PC-3 (cell line): ENCODE measurements at regions of chr1 and their contacts with region 1.

Region 1: GRCh38 chr1:22416555-22417454 is 34.8 kb upstream of the ZBTB40 start:
- DNase-seq: peak; percentile 82
- ATAC-seq: peak; percentile 45
- H3K4me3 ChIP-seq: no peak overlapping the region
- H3K27ac ChIP-seq: no peak overlapping the region
- H3K4me1 ChIP-seq: peaks cover 29% of the 10 kb centered on the region
- H3K27me3 ChIP-seq: no peaks in the 10 kb centered on the region
- CTCF ChIP-seq: peak; percentile 98

Region 2: GRCh38 chr1:22131875-22132486 is 284.8 kb before region 1 on chr1:
- CTCF ChIA-PET with region 1: interaction called, 8 read pairs
- POLR2A ChIA-PET with region 1: no interaction called
- intact Hi-C with region 1: loop called (anchors 1 kb)
- DNase-seq: peak; percentile 63
- ATAC-seq: peak; percentile 68
- H3K4me3 ChIP-seq: no peak overlapping the region
- H3K27ac ChIP-seq: no peak overlapping the region
- H3K4me1 ChIP-seq: peaks cover 20% of the 10 kb centered on the region
- H3K27me3 ChIP-seq: no peaks in the 10 kb centered on the region
- CTCF ChIP-seq: peak; percentile 93

Region 3: GRCh38 chr1:22275721-22276395 is 140.9 kb before region 1 on chr1:
- CTCF ChIA-PET with region 1: interaction called, 3 read pairs
- POLR2A ChIA-PET with region 1: no interaction called
- intact Hi-C with region 1: loop called (anchors 2 kb)
- DNase-seq: peak; percentile 67
- ATAC-seq: peak; percentile 89
- H3K4me3 ChIP-seq: no peak overlapping the region
- H3K27ac ChIP-seq: peak overlapping the region; percentile 73
- H3K4me1 ChIP-seq: peaks cover 34% of the 10 kb centered on the region
- H3K27me3 ChIP-seq: no peaks in the 10 kb centered on the region
- CTCF ChIP-seq: peak; percentile 79

Region 4: GRCh38 chr1:22641906-22642636 is 225.3 kb after region 1 on chr1:
- CTCF ChIA-PET with region 1: no interaction called
- POLR2A ChIA-PET with region 1: interaction called, 7 read pairs
- intact Hi-C with region 1: loop called (anchors 1 kb)
- DNase-seq: peak; percentile 69
- ATAC-seq: peak; percentile 90
- H3K4me3 ChIP-seq: no peak overlapping the region
- H3K27ac ChIP-seq: no peak overlapping the region
- H3K4me1 ChIP-seq: peaks cover 15% of the 10 kb centered on the region
- H3K27me3 ChIP-seq: no peaks in the 10 kb centered on the region
- CTCF ChIP-seq: peak; percentile 91

Region 5: DNA sequence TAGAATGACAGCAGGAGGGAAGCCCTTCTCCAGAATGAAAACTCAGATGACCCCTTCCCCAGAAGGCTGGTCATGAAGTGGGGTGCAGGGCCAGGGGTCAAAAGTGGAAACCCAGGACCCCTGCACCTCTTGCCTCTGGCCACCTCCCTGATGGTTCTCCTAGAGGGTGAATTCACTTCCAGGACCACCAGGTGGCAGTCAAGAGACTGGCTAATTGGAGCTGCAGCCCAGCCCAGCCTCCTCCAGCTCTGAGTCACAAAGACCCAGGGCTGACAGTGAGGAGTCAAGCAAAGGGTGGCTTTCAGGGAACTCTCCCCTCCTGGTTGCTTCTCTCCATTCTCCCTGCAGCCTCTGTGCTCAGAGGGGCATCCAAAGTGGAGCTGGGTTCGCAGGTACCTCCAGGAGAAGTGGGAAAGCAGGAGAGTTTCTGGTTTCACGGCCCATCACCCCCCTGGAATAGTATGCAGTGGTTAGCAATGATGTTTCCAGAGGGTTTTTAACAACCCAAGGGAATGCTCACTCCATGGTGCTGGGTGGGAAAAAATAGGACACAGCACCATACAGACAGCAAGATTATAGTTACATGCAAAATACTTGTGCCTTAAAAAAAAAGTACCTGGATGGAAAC is 287.7 kb after region 1 on chr1:
- CTCF ChIA-PET with region 1: no interaction called
- POLR2A ChIA-PET with region 1: no interaction called
- intact Hi-C with region 1: no loop called
- DNase-seq: peak; percentile 90
- ATAC-seq: peak; percentile 99
- H3K4me3 ChIP-seq: no peak overlapping the region
- H3K27ac ChIP-seq: no peak overlapping the region
- H3K4me1 ChIP-seq: peaks cover 10% of the 10 kb centered on the region; the same call in 1 of the 2 replicates
- H3K27me3 ChIP-seq: no peaks in the 10 kb centered on the region
- CTCF ChIP-seq: peak; percentile 85